ENCODE measurements at regions of chr1 and their contacts with region 1.

Region 1: DNA sequence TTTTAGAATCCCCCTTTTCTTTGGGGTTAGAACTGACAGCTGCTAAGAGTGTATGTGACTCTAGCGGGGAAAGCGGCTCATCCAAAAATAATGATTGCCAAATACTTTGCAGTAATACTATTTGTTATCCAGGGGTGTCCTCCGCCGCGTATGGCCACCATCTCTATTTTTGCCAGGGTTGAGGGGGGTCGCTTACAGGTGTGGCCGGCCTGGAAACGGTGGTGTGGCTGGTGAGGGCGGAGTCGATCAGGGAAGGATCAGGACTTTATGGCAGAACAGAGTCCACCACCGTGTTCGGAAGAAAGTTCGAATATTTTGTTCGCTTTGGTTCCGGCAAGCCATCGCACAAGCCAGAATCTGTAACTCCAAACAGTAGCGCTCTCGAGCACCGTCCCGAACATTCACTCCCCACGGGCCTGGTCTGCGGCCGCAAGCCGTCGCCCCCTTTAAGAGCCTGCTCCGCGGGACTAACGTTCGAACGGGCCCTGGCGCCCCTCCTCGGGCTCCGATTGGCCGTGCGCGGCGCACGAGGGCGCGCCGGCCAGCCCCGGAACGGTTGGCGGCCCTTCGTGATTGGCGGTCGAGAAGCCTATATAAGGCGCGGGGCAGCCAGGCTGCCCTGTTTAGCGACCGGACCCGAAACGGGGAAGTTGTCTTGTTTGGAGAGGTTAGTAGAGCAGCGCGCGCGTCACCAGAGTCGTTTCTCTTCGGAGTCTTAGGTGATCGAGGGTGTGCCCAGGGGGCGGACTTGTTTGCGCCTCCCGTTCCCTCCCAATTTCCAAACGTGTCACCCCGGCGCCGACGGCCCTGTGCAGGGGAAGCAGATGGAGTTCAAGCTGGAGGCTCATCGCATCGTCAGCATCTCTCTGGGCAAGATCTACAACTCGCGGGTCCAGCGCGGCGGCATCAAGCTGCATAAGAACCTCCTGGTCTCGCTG is at the start of gene IER5:
- DNase-seq: peak; percentile 98
- H3K4me3 Mint-ChIP-seq: peak within 1 kb of the TSS; percentile 99
- H3K27ac Mint-ChIP-seq: peak within 1 kb of the TSS; percentile 98
- H3K4me1 Mint-ChIP-seq: peaks cover 55% of the 10 kb centered on the region
- H3K27me3 Mint-ChIP-seq: peaks cover 3% of the 10 kb centered on the region
- total RNA-seq, gene IER5: 41.6 to 43.9 TPM

Region 2: DNA sequence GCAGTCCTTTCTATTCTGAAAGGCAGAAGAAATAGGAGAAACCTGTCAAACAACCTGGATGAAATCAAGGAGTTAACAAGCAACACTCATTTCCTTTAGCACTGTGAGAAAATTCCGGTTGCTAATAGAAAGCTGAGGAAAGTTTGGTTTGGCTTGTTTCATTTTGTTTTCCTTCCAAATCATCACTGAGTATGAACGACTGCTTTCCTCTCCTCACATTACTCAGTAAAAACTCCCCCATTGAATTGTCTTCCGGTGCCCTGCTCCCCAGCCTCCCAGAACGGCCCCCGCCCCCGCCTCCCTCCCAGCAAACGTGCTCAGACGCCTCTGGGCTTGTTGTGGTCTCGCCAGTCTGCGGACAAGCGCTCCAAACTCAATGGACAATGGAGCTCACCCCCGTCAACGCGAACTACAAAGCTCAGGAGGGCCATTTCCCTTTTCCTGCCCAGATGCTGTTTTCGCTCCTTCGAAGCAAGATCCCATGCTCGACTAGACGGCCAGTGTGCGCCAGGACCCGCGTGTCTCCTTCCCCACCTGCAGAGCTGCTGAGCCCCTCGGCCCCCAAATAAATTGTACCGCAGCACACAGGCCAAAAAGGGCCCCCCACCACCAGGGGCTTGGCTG is 66.4 kb before region 1 on chr1:
- CTCF ChIA-PET with region 1: no interaction called
- POLR2A ChIA-PET with region 1: interaction called, 16 read pairs
- DNase-seq: peak; percentile 62
- H3K4me3 Mint-ChIP-seq: peak overlapping the region; percentile 95
- H3K27ac Mint-ChIP-seq: peak overlapping the region; percentile 89
- H3K4me1 Mint-ChIP-seq: peaks cover 48% of the 10 kb centered on the region
- H3K27me3 Mint-ChIP-seq: peaks cover 18% of the 10 kb centered on the region

Region 3: GRCh38 chr1:181062836-181063428 is 25.4 kb before region 1 on chr1:
- CTCF ChIA-PET with region 1: interaction called, 3 read pairs
- POLR2A ChIA-PET with region 1: interaction called, 35 read pairs
- DNase-seq: peak; percentile 57
- H3K4me3 Mint-ChIP-seq: peak overlapping the region; percentile 65
- H3K27ac Mint-ChIP-seq: peak overlapping the region; percentile 79
- H3K4me1 Mint-ChIP-seq: peaks cover 25% of the 10 kb centered on the region
- H3K27me3 Mint-ChIP-seq: peaks cover 2% of the 10 kb centered on the region

Region 4: GRCh38 chr1:181105134-181106021 is 17.0 kb after region 1 on chr1:
- CTCF ChIA-PET with region 1: interaction called, 55 read pairs
- POLR2A ChIA-PET with region 1: interaction called, 374 read pairs
- DNase-seq: peak; percentile 94
- H3K4me3 Mint-ChIP-seq: peak overlapping the region; percentile 78
- H3K27ac Mint-ChIP-seq: peak overlapping the region; percentile 51
- H3K4me1 Mint-ChIP-seq: peaks cover 69% of the 10 kb centered on the region
- H3K27me3 Mint-ChIP-seq: peaks cover 35% of the 10 kb centered on the region

Region 5: DNA sequence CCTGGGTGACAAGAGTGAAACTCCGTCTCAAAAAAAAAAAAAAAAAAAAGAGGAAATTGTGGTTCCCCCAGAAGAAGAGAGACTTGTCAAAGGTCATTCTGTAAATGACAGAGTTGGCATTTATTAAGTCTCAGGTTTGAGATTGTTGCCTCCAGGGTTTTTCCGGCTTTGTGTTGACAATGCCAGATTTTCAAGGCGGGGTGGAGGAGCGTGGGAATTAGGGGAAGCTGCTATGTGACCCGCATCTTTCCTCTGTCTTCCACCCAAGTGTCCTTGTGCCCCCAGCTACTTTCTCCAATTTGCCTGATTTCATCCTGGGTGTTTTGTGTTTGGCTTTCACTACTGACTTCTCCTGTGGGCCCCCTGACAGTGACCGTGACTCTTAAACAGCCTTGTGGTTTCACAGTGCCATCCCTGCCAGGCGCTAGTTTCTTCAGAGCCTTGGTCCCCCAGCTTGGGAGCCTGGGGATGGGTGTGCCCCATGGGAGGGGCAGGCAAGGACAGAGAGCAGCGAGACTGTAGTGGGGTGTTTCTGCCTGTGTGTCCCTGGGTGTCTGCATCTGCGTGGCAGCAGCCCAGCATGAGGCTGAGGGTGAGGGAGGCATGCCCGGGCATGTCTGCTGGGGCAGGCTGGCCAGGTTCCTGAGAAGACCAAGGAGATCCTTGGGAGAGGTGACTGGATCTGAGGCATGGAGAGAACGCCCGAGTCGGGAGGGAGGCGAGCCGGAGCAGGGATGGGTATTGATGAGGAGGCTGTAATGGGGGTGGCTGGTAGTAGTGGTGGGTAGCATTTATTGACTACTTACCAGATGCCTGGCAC is 46.4 kb after region 1 on chr1:
- CTCF ChIA-PET with region 1: interaction called, 97 read pairs
- POLR2A ChIA-PET with region 1: interaction called, 322 read pairs
- DNase-seq: peak; percentile 42
- H3K4me3 Mint-ChIP-seq: peak overlapping the region; percentile 25
- H3K27ac Mint-ChIP-seq: peak overlapping the region; percentile 90
- H3K4me1 Mint-ChIP-seq: peaks cover 74% of the 10 kb centered on the region
- H3K27me3 Mint-ChIP-seq: no peaks in the 10 kb centered on the region

Measured in activated CD4-positive, alpha-beta memory T cell treated with anti-CD3 and anti-CD28 coated beads, Interleukin-2, amount 10 ng/mL, durations not matched to agents 7 days and 5 days (primary cell).